Dorsolateral prefrontal cortex (tissue), 120 donors: ENCODE measurements at regions of chr9 and their contacts with region 1.

Region 1: GRCh38 chr9:98263482-98264357 is 8.3 kb upstream of the TBC1D2 start:
- DNase-seq: peak; percentile 68 to 90 (median 82)
- H3K4me3 ChIP-seq: no peak overlapping the region
- H3K27ac ChIP-seq: no peak overlapping the region
- H3K27me3 ChIP-seq: no peaks in the 10 kb centered on the region
- CTCF ChIP-seq: peak; percentile 56 to 98 (median 87)

Region 2: GRCh38 chr9:98074115-98074990 is 189.4 kb before region 1 on chr9:
- intact Hi-C with region 1: loop called (anchors 5 kb)
- DNase-seq: peak in 9 of 10 donors; percentile 39 to 81 (median 63)
- H3K4me3 ChIP-seq: no peak overlapping the region
- H3K27ac ChIP-seq: peak overlapping the region in 5 of 59 donors; percentile 18 to 51 (median 29)
- H3K27me3 ChIP-seq: no peaks in the 10 kb centered on the region
- CTCF ChIP-seq: peak; percentile 86 to 98 (median 95)

Region 3: DNA sequence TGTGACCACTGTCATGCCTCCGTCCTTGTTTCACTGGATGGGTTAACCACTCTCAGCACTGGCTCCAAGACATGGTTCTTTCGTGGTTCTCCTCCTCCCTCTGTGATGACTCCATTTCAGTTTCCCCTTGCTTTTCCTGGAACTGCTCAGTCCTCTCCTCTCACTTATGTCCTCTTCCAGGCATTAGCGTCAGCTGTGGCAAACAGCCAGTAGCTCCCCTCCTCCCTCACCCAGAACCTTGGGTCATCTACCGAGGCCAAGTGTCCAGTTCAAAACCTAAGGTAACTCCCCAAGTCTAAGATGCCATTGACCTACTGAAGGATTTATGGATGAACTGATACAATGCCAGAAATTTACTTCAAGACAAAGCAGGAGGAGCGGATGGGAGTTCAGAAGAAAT is 61.5 kb before region 1 on chr9:
- intact Hi-C with region 1: loop called (anchors 1 to 5 kb)
- DNase-seq: no peak
- H3K4me3 ChIP-seq: no peak overlapping the region
- H3K27ac ChIP-seq: no peak overlapping the region
- H3K27me3 ChIP-seq: no peaks in the 10 kb centered on the region
- CTCF ChIP-seq: no peak

Region 4: GRCh38 chr9:98410185-98410697 is 146.5 kb after region 1 on chr9:
- intact Hi-C with region 1: no loop called
- DNase-seq: peak in 6 of 10 donors; percentile 50 to 72 (median 67)
- H3K4me3 ChIP-seq: peak overlapping the region in 7 of 59 donors; percentile 8 to 37 (median 18)
- H3K27ac ChIP-seq: peak overlapping the region in 33 of 59 donors; percentile 4 to 79 (median 58)
- H3K27me3 ChIP-seq: no peaks in the 10 kb centered on the region
- CTCF ChIP-seq: peak in 25 of 56 donors; percentile 8 to 32 (median 17)